ENCODE measurements at regions of chr19 and their contacts with region 1.

Region 1: GRCh38 chr19:56252699-56253422 is 19.7 kb upstream of the EDDM13 start:
- DNase-seq: no peak
- ATAC-seq: peak; percentile 84
- H3K4me3 ChIP-seq: no peak overlapping the region
- H3K27ac ChIP-seq: no peak overlapping the region
- H3K4me1 ChIP-seq: no peaks in the 10 kb centered on the region
- H3K27me3 ChIP-seq: no peaks in the 10 kb centered on the region
- CTCF ChIP-seq: peak; percentile 61 to 86 (median 78)
- EP300 ChIP-seq: no peak
- POLR2A ChIP-seq: no peak
- RAD21 ChIP-seq: peak; percentile 56

Region 2: GRCh38 chr19:55766466-55766865 is 486.4 kb before region 1 on chr19:
- CTCF ChIA-PET with region 1: no interaction called
- POLR2A ChIA-PET with region 1: no interaction called
- RAD21 ChIA-PET with region 1: no interaction called
- SMC1A ChIA-PET with region 1: no interaction called
- in situ Hi-C with region 1: no loop called
- intact Hi-C with region 1: no loop called
- DNase-seq: peak; percentile 5
- ATAC-seq: no peak
- H3K4me3 ChIP-seq: no peak overlapping the region
- H3K27ac ChIP-seq: no peak overlapping the region
- H3K4me1 ChIP-seq: no peaks in the 10 kb centered on the region
- H3K27me3 ChIP-seq: no peaks in the 10 kb centered on the region
- CTCF ChIP-seq: no peak
- EP300 ChIP-seq: no peak
- POLR2A ChIP-seq: no peak
- RAD21 ChIP-seq: no peak

Region 3: GRCh38 chr19:56080669-56081401 is 172.0 kb before region 1 on chr19:
- CTCF ChIA-PET with region 1: interaction called, 38 read pairs
- POLR2A ChIA-PET with region 1: no interaction called
- RAD21 ChIA-PET with region 1: interaction called, 7 read pairs
- SMC1A ChIA-PET with region 1: interaction called, 12 read pairs
- in situ Hi-C with region 1: no loop called
- intact Hi-C with region 1: no loop called
- DNase-seq: peak; percentile 38
- ATAC-seq: peak; percentile 89
- H3K4me3 ChIP-seq: peak overlapping the region; percentile 61; the same call in 1 of the 2 replicates
- H3K27ac ChIP-seq: peak overlapping the region; percentile 3; the same call in 1 of the 2 replicates
- H3K4me1 ChIP-seq: peaks cover 5% of the 10 kb centered on the region; the same call in 1 of the 2 replicates
- H3K27me3 ChIP-seq: no peaks in the 10 kb centered on the region
- CTCF ChIP-seq: peak; percentile 64 to 69 (median 64)
- EP300 ChIP-seq: peak; percentile 57 to 58; a peak in 1 of 4 replicates
- POLR2A ChIP-seq: peak; percentile 62; the same call in 1 of the 2 replicates
- RAD21 ChIP-seq: peak; percentile 60

Region 4: GRCh38 chr19:56270676-56271075 is 17.8 kb after region 1 on chr19:
- CTCF ChIA-PET with region 1: interaction called, 24 read pairs
- POLR2A ChIA-PET with region 1: no interaction called
- RAD21 ChIA-PET with region 1: no interaction called
- SMC1A ChIA-PET with region 1: interaction called, 15 read pairs
- in situ Hi-C with region 1: no loop called
- intact Hi-C with region 1: no loop called
- DNase-seq: no peak
- ATAC-seq: no peak
- H3K4me3 ChIP-seq: no peak overlapping the region
- H3K27ac ChIP-seq: no peak overlapping the region
- H3K4me1 ChIP-seq: no peaks in the 10 kb centered on the region
- H3K27me3 ChIP-seq: no peaks in the 10 kb centered on the region
- CTCF ChIP-seq: no peak
- EP300 ChIP-seq: no peak
- POLR2A ChIP-seq: no peak
- RAD21 ChIP-seq: no peak

Region 5: GRCh38 chr19:56350416-56351045 is 97.7 kb after region 1 on chr19:
- CTCF ChIA-PET with region 1: interaction called, 38 read pairs
- POLR2A ChIA-PET with region 1: no interaction called
- RAD21 ChIA-PET with region 1: interaction called, 13 read pairs
- SMC1A ChIA-PET with region 1: interaction called, 8 read pairs
- in situ Hi-C with region 1: no loop called
- intact Hi-C with region 1: no loop called
- DNase-seq: peak; percentile 11
- ATAC-seq: peak; percentile 48; the same call in 2 of the 3 replicates
- H3K4me3 ChIP-seq: no peak overlapping the region
- H3K27ac ChIP-seq: no peak overlapping the region
- H3K4me1 ChIP-seq: no peaks in the 10 kb centered on the region
- H3K27me3 ChIP-seq: no peaks in the 10 kb centered on the region
- CTCF ChIP-seq: peak; percentile 74 to 84 (median 78); a peak in 5 of 6 replicates
- EP300 ChIP-seq: no peak
- POLR2A ChIP-seq: no peak
- RAD21 ChIP-seq: peak; percentile 53

Measured in GM12878 (cell line).